ENCODE measurements at regions of chr2 and their contacts with region 1.

Region 1: DNA sequence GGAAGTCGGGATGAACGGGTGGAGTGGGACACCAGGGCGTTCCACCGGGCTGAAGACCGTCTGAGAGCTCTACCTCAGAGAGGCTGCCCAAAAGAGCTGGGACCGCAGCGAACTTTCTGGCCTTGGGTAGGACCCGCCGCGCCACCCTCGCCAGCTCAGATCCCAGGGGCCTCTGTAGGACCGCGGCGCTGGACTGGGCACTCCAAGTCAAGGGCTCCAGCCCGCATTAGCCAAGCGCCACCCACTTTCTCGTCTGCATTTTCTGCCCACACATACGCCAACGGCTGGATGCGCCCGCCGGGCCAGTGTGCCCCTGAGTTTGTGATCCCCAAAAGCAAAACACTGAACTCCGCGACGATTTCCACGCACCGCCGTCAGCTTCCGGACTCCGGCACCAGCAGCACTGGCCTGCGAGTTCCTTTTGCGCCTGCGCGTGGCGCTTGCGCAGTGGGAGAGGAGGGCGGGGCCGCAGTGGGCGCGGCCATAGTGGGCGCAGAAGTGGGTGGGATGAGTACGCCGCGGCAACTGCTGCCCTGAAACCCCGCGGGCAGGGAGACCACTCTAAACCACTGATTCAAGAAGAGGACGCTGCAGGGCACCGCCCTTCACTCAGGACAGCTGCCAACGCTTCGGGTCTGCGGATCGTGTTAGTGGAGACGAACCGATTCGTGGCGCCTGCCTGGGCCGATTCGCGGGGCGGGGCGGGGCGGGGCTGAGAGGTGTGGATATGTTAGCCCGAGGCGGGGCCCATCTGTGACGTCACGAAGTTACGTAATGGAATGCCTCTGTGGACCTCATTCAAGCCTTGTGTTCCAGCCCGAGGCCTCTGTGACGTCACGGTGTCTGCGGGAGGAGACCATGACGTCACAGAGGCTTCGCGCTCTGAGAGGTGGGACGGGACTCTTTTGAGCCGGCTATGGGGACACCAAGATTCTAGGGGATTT is 10.5 kb downstream of the OSR1 start:
- DNase-seq: peak; percentile 97 to 99
- H3K4me3 ChIP-seq: peak overlapping the region; percentile 81 to 87
- H3K27ac ChIP-seq: peak overlapping the region; percentile 96
- H3K4me1 ChIP-seq: peaks cover 13 to 44% of the 10 kb centered on the region in 2 donors
- H3K27me3 ChIP-seq: no peaks in the 10 kb centered on the region
- CTCF ChIP-seq: no peak

Region 2: GRCh38 chr2:18520451-18521425 is 827.2 kb before region 1 on chr2:
- intact Hi-C with region 1: loop called (anchors 2 kb)
- DNase-seq: peak; percentile 19 to 95
- H3K4me3 ChIP-seq: peak overlapping the region in 1 of 2 donors; percentile 17
- H3K27ac ChIP-seq: peak overlapping the region; percentile 53 to 66
- H3K4me1 ChIP-seq: peaks cover 3 to 28% of the 10 kb centered on the region in 2 donors
- H3K27me3 ChIP-seq: no peaks in the 10 kb centered on the region
- CTCF ChIP-seq: peak; percentile 84 to 94 (median 91)

Region 3: GRCh38 chr2:18903750-18904149 is 444.1 kb before region 1 on chr2:
- intact Hi-C with region 1: loop called (anchors 5 kb)
- DNase-seq: no peak
- H3K4me3 ChIP-seq: no peak overlapping the region
- H3K27ac ChIP-seq: no peak overlapping the region
- H3K4me1 ChIP-seq: peaks cover 9 to 23% of the 10 kb centered on the region in 2 donors
- H3K27me3 ChIP-seq: no peaks in the 10 kb centered on the region
- CTCF ChIP-seq: no peak

Region 4: GRCh38 chr2:19256121-19256601 is 91.7 kb before region 1 on chr2:
- intact Hi-C with region 1: no loop called
- DNase-seq: no peak
- H3K4me3 ChIP-seq: no peak overlapping the region
- H3K27ac ChIP-seq: no peak overlapping the region
- H3K4me1 ChIP-seq: no peaks in the 10 kb centered on the region
- H3K27me3 ChIP-seq: no peaks in the 10 kb centered on the region
- CTCF ChIP-seq: no peak

Region 5: GRCh38 chr2:19332503-19332902 is 15.4 kb before region 1 on chr2:
- intact Hi-C with region 1: no loop called
- DNase-seq: no peak
- H3K4me3 ChIP-seq: no peak overlapping the region
- H3K27ac ChIP-seq: no peak overlapping the region
- H3K4me1 ChIP-seq: no peaks in the 10 kb centered on the region
- H3K27me3 ChIP-seq: no peaks in the 10 kb centered on the region
- CTCF ChIP-seq: no peak

Region 6: DNA sequence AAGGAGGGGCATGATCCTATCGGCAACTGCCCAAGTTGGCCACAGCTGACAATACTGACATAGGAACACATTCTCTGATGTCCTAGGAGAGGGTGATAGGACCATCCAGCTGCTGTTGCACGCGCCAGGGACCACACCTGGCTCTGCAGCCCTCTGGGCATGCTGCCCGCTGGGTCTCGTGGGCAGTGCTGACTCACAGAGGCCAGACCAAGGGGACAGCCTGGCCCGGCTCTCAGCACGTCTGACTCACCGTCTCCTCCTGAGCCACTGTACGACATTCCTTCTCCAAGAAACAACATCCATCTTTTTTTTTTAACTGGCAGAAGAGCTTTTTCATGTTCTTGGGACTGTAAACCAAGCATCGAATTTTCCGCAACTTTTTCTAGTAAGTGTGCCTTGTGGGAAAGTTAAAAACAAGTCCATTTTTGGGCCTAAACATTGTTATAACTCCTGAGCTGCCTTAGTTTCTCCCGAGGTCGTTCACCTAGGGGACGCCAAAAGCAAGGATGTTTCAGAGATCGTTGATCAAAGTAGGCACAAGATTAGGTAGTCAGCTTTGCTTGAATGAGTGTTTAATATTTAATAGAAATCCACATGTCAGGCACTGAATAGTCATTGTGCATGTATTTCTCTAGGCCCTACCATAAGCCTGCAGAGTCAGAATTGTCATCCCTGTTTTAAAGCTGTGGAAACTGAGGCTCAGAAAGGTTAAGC is 453.6 kb after region 1 on chr2:
- intact Hi-C with region 1: loop called (anchors 5 kb)
- DNase-seq: peak; percentile 91 to 97
- H3K4me3 ChIP-seq: no peak overlapping the region
- H3K27ac ChIP-seq: peak overlapping the region; percentile 89 to 93
- H3K4me1 ChIP-seq: peaks cover 20 to 47% of the 10 kb centered on the region in 2 donors
- H3K27me3 ChIP-seq: no peaks in the 10 kb centered on the region
- CTCF ChIP-seq: no peak

Region 7: DNA sequence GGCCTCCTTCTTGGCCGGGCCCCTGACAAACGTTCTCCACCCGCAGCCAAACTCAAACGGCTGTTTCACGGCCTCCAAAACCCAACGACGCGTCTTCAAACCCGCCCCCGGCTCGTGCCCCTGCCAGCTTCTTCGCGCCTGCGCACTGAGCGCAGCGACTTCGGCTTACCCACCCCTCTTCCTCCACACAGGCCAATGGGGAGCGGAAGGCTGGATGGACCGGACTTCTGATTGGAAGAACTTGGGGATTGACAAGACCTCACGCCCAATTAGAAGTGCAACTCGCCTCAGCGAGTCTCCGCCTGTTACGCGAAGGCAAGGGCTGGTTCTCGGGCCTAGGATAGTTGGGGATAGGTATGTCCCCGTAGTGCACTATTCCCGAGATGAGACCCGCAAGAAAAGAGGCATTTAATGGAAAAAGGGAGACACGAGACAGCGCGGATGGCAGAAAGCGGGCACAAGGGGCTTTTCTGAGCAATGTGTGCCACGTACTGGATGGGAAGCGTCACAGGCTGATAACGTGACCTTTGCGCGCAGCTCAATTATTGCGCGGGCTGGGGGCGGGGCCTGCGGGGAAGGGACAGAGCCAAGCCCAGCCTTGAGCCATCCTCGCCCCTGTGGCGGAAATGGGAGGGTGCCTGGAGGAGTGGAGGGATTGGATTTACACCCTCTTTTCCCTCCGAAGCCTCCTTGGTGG is 703.8 kb after region 1 on chr2 and contains the start of gene LAPTM4A:
- intact Hi-C with region 1: loop called (anchors 10 kb)
- DNase-seq: peak; percentile 97 to 100
- H3K4me3 ChIP-seq: peak within 1 kb of the TSS; percentile 73 to 81
- H3K27ac ChIP-seq: peak within 1 kb of the TSS; percentile 96
- H3K4me1 ChIP-seq: peaks cover 0 to 21% of the 10 kb centered on the region in 2 donors
- H3K27me3 ChIP-seq: no peaks in the 10 kb centered on the region
- CTCF ChIP-seq: no peak
- total RNA-seq, gene LAPTM4A: 95.6 TPM

Measured in ascending aorta (tissue), 2 donors.